ENCODE measurements at regions of chr7 and their contacts with region 1.

Region 1: DNA sequence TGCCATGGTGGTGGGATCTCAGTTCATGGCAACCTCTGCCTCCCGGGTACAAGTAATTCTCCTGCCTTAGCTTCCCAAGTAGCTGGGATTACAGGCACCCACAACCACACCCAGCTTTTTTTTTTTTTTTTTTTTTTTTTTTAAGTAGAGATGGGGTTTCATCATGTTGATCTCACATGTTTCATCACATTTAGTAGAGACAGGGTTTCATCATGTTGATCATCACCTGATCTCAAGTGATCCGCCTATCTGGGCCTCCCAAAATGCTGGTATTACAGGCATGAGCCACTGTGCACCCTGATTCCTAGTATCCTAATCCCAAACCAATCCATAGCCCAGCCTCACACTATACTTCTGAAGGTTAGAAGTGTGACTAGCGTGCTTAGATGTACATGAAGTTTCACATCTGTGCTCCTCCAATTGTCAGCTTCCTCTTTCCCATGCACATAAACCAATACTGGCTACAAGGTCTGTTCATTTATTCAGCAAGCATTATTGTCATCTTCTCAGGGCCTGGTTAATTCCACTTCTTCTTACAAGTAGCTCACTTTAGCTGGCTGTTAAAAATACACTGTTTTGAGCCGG is 6.8 kb upstream of the NAT16 start:
- DNase-seq: no peak
- ATAC-seq: no peak
- H3K4me3 ChIP-seq: no peak overlapping the region
- H3K4me3 Mint-ChIP-seq: no peak overlapping the region
- H3K27ac ChIP-seq: no peak overlapping the region
- H3K27ac Mint-ChIP-seq: no peak overlapping the region
- H3K4me1 ChIP-seq: no peaks in the 10 kb centered on the region
- H3K4me1 Mint-ChIP-seq: peaks cover 0 to 7% (median 4%) of the 10 kb centered on the region in 7 donors
- H3K27me3 ChIP-seq: no peaks in the 10 kb centered on the region
- H3K27me3 Mint-ChIP-seq: peaks cover 20 to 32% (median 23%) of the 10 kb centered on the region in 5 donors

Region 2: DNA sequence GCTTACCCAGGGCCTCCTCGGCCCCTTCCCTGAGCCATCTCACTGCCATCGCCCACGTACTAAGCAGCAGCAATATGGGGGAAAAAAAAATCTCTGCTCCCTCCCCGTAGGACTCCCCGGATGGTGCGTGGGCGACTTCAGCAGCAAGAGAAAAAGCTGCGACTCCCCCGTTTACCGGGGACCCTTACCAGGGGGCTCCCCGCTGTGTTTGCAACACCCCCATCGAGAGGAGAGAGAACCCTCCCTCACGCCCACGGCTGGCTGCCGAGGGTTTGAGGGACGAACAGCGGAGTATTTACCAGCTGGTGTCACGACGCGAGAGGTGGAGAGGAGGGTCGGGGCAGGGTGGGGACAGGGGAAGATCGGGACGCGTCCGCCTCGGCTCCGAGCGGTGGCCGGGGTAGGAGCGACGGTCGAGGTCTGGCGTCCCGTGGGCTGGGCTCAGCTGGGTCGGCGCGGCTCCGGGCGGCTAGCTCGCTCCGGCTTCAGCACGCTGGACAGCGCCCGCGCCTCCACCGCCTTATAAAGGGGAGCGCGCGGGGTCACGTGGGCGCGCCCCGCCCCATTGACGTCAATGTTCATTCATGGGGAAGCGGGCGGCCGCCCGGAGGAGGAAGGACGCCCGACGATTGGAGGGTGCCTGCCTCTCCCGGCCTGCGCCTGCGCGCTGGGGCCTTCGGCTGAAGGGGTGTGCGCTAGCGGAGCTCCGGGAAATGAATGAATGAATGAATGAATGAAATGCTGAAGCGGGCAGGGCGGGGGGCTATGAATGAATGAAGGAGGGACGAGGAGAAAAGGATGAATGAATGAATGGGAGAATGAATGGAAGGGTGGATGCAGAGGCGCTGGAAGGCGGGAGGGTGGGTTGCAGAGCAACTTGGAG is 21.6 kb before region 1 on chr7 and contains the start of gene VGF:
- CTCF ChIA-PET with region 1: interaction called, 3 read pairs
- POLR2A ChIA-PET with region 1: no interaction called
- intact Hi-C with region 1: loop called in 1 of 2 experiments (anchors 1 kb)
- DNase-seq: peak; percentile 84 to 97 (median 90)
- ATAC-seq: peak; percentile 93
- H3K4me3 ChIP-seq: peak within 1 kb of the TSS; percentile 10
- H3K4me3 Mint-ChIP-seq: peak within 1 kb of the TSS; percentile 58 to 92 (median 77)
- H3K27ac ChIP-seq: no peak within 1 kb of the TSS
- H3K27ac Mint-ChIP-seq: peak within 1 kb of the TSS; percentile 4 to 87 (median 73)
- H3K4me1 ChIP-seq: peaks cover 34 to 40% of the 10 kb centered on the region in 2 donors
- H3K4me1 Mint-ChIP-seq: peaks cover 39 to 56% (median 46%) of the 10 kb centered on the region in 7 donors
- H3K27me3 ChIP-seq: peaks cover 20 to 46% of the 10 kb centered on the region in 2 donors
- H3K27me3 Mint-ChIP-seq: peaks cover 55 to 70% (median 62%) of the 10 kb centered on the region in 5 donors
- total RNA-seq, gene VGF: 0.19 TPM in 1 of 5 experiments, not detected in the others

Region 3: DNA sequence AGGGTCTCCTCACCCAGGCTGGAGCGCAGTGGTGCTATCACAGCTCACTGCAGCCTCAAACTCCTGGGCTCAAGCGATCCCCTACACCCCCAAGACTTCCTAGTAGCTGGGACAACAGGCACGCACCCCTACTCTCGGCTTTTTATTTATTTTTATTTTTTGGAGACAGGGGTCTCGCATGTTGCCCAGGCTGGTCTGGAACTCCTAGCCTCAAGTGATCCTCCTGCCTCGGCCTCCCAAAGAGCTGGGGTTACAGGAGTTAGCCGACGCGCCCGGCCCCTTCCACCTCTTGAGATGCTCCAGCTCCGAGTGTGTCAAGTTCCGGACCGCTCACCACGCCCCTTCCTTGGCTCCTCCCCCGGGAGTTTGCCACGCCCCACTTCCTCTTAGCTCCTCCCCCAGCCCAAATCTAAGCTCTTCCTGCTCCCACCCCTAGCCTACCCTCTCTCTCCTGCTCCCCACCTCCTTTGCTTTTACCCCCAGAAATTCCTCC is 13.1 kb before region 1 on chr7:
- CTCF ChIA-PET with region 1: interaction called, 3 read pairs
- POLR2A ChIA-PET with region 1: no interaction called
- intact Hi-C with region 1: loop called (anchors 1 to 2 kb)
- DNase-seq: peak; percentile 49 to 79 (median 68)
- ATAC-seq: peak; percentile 75
- H3K4me3 ChIP-seq: no peak overlapping the region
- H3K4me3 Mint-ChIP-seq: peak overlapping the region; percentile 56 to 84 (median 68)
- H3K27ac ChIP-seq: no peak overlapping the region
- H3K27ac Mint-ChIP-seq: peak overlapping the region in 4 of 9 donors; percentile 1 to 50 (median 16)
- H3K4me1 ChIP-seq: peaks cover 38 to 56% of the 10 kb centered on the region in 2 donors
- H3K4me1 Mint-ChIP-seq: peaks cover 38 to 62% (median 44%) of the 10 kb centered on the region in 7 donors
- H3K27me3 ChIP-seq: peaks cover 9 to 66% of the 10 kb centered on the region in 2 donors
- H3K27me3 Mint-ChIP-seq: peaks cover 79 to 91% (median 89%) of the 10 kb centered on the region in 5 donors

Region 4: GRCh38 chr7:101287032-101287431 is 100.1 kb after region 1 on chr7:
- CTCF ChIA-PET with region 1: no interaction called
- POLR2A ChIA-PET with region 1: no interaction called
- intact Hi-C with region 1: loop called (anchors 1 to 2 kb)
- DNase-seq: no peak
- ATAC-seq: no peak
- H3K4me3 ChIP-seq: no peak overlapping the region
- H3K4me3 Mint-ChIP-seq: no peak overlapping the region
- H3K27ac ChIP-seq: no peak overlapping the region
- H3K27ac Mint-ChIP-seq: no peak overlapping the region
- H3K4me1 ChIP-seq: no peaks in the 10 kb centered on the region
- H3K4me1 Mint-ChIP-seq: peaks cover 3 to 17% (median 5%) of the 10 kb centered on the region in 7 donors
- H3K27me3 ChIP-seq: no peaks in the 10 kb centered on the region
- H3K27me3 Mint-ChIP-seq: peaks cover 6 to 21% (median 9%) of the 10 kb centered on the region in 5 donors

Measured in naive thymus-derived CD4-positive, alpha-beta T cell (primary cell).